H1 (cell line): ENCODE measurements at regions of chr11 and their contacts with region 1.

Region 1: DNA sequence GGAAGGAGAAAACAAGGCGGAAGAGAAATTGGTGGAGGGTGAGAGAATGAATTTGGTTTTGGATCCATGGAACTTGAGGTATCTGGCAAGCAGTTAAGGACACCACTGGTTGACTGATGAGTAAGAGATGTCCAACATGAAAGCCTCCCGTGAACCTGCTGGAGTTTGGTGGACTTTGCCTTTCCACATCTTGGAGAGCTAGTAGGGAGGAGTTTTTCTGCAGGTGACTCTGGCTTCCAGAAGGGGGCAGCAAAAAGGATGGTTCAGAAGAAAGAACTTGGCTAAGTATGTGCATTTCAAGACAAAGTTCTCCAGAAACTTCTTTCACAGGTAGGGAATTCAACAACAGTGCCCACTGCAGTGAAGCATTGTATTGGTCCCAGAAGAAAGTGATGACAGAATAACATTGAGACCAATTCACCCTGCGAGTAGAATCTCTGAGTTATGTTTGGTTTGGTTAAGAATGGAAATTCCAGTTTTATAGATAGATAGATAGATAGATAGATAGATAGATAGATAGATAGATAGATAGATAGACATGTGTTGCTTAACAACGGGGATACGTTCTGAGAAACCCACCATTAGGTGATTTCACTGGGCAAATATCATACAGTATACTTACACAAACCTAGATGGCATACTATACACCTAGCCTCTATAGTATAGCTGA is 28.5 kb downstream of the DCDC1 start:
- DNase-seq: peak; percentile 1 to 46
- H3K4me3 ChIP-seq: no peak overlapping the region
- H3K27ac ChIP-seq: no peak overlapping the region
- H3K4me1 ChIP-seq: no peaks in the 10 kb centered on the region
- H3K27me3 ChIP-seq: no peaks in the 10 kb centered on the region
- CTCF ChIP-seq: peak; percentile 10 to 76 (median 67)
- EP300 ChIP-seq: no peak
- POLR2A ChIP-seq: no peak
- RAD21 ChIP-seq: peak; percentile 58 to 64

Region 2: GRCh38 chr11:31240338-31240904 is 100.6 kb before region 1 on chr11:
- CTCF ChIA-PET with region 1: interaction called, 12 read pairs
- POLR2A ChIA-PET with region 1: no interaction called
- DNase-seq: no peak
- H3K4me3 ChIP-seq: no peak overlapping the region
- H3K27ac ChIP-seq: no peak overlapping the region
- H3K4me1 ChIP-seq: peaks cover 0 to 13% (median 5%) of the 10 kb centered on the region in 4 experiments; a peak in 3 of 7 replicates
- H3K27me3 ChIP-seq: no peaks in the 10 kb centered on the region
- CTCF ChIP-seq: peak in 2 of 3 experiments; percentile 53 to 78; a peak in 2 of 4 replicates
- EP300 ChIP-seq: no peak
- POLR2A ChIP-seq: no peak
- RAD21 ChIP-seq: peak; percentile 81 to 86

Region 3: DNA sequence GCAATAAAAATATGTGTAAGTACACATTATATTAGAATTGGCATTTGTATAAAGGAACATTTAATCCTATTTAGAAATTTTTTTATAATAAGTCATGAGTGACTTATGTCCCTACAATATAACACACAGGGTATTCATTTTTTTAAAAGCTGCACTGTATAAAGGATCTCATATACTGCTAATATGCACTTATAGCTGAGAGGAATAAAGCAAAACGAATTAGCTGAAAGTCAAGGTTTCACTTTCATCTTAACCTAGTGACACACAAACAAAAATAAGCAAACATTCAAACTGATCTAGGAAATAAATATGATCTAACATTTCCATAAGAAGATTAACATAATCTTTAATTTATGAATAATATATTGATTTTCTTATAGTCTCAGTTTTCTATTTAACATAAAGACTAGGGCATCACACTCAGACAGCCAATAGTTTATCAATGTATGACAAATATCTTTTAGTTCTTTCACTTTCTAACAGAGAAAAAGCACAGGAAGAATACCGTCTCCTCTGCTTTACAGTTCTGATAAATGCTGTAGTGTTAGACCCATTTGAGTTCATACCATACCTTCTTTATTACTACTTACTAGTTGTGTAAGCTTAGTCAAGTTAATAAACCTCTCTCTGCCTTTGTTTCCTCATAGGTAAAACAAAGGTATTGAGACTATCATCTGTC is 14.4 kb before region 1 on chr11:
- CTCF ChIA-PET with region 1: interaction called, 14 read pairs
- POLR2A ChIA-PET with region 1: no interaction called
- DNase-seq: no peak
- H3K4me3 ChIP-seq: no peak overlapping the region
- H3K27ac ChIP-seq: no peak overlapping the region
- H3K4me1 ChIP-seq: no peaks in the 10 kb centered on the region
- H3K27me3 ChIP-seq: no peaks in the 10 kb centered on the region
- CTCF ChIP-seq: no peak
- EP300 ChIP-seq: no peak
- POLR2A ChIP-seq: no peak
- RAD21 ChIP-seq: no peak

Region 4: DNA sequence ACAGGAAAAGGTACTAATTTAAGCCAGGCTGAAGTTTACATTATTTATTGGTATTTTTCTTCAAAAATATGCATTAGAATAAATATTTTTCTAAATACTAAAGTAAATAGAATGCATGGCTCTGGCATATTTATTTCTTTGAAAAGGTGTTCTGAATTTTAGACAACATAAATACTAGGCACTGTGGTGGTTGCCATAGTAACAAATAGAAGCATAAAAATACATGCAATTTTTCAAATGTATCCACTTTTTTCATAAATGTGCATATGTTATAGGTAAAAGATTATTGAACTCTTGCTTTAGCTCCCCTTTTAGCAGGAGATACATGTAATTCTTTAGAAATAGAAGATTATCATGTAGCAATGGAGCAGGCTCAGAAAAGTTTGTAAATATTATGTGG is 10.1 kb after region 1 on chr11:
- CTCF ChIA-PET with region 1: interaction called, 15 read pairs
- POLR2A ChIA-PET with region 1: no interaction called
- DNase-seq: no peak
- H3K4me3 ChIP-seq: no peak overlapping the region
- H3K27ac ChIP-seq: no peak overlapping the region
- H3K4me1 ChIP-seq: peaks cover 0 to 2% (median 0%) of the 10 kb centered on the region in 4 experiments; a peak in 1 of 7 replicates
- H3K27me3 ChIP-seq: no peaks in the 10 kb centered on the region
- CTCF ChIP-seq: no peak
- EP300 ChIP-seq: no peak
- POLR2A ChIP-seq: no peak
- RAD21 ChIP-seq: no peak

Region 5: GRCh38 chr11:31369348-31370329 is 28.6 kb after region 1 on chr11 and contains the starts of genes DCDC1 and DNAJC24:
- CTCF ChIA-PET with region 1: interaction called, 13 read pairs
- POLR2A ChIA-PET with region 1: no interaction called
- DNase-seq: peak; percentile 89 to 94
- H3K4me3 ChIP-seq: peak within 1 kb of the TSS; percentile 82 to 91 (median 84)
- H3K27ac ChIP-seq: peak within 1 kb of the TSS; percentile 48; the same call in 1 of the 2 replicates
- H3K4me1 ChIP-seq: no peaks in the 10 kb centered on the region
- H3K27me3 ChIP-seq: no peaks in the 10 kb centered on the region; a peak in 1 of 7 replicates
- CTCF ChIP-seq: no peak
- EP300 ChIP-seq: no peak
- POLR2A ChIP-seq: peak in 1 of 2 experiments; percentile 92; a peak in 2 of 3 replicates
- RAD21 ChIP-seq: peak in 1 of 2 experiments; percentile 2; a peak in 1 of 4 replicates
- total RNA-seq, gene DCDC1: 0.52 and 0.56 TPM in 2 replicates
- total RNA-seq, gene DNAJC24: 21.1 TPM in 2 replicates

Region 6: GRCh38 chr11:31492320-31492913 is 151.4 kb after region 1 on chr11:
- CTCF ChIA-PET with region 1: no interaction called
- POLR2A ChIA-PET with region 1: no interaction called
- DNase-seq: no peak
- H3K4me3 ChIP-seq: no peak overlapping the region
- H3K27ac ChIP-seq: no peak overlapping the region
- H3K4me1 ChIP-seq: 0 out of 7 replicates have a peak, but pooled peaks cover 0 to 2% (median 0%) of the 10 kb centered on the region in 4 experiments
- H3K27me3 ChIP-seq: no peaks in the 10 kb centered on the region
- CTCF ChIP-seq: no peak
- EP300 ChIP-seq: no peak
- POLR2A ChIP-seq: no peak
- RAD21 ChIP-seq: no peak